SK-N-SH (cell line): ENCODE measurements at regions of chr2 and their contacts with region 1.

Region 1: DNA sequence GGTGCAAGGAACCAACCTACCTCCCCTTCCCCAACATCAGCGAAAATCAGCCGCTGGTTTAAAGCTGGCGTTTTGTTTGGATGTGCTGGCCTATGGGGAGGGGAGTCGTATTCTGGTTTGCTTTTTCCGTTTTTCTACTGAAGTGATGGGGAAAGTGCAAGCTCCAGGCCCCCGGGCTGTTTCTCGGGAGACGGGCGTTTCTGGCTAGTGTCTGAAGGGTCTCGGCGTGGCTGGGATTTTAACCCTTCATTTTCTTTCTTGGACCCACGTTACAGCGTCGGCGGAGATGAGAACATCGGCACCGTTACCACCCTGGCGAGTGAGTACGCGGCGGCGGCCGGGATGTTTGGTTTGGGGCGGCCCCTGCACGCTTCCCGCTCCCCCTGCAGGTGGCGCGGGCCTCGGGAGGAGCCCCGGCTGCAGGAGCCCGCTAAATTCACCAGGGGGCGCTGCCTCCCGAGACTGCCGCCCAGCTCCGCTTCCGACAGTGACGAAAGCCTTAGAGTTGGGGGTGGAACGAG is 70.7 kb downstream of the PLB1 start:
- DNase-seq: peak; percentile 98
- H3K4me3 ChIP-seq: peak overlapping the region; percentile 62
- H3K27ac ChIP-seq: peak overlapping the region; percentile 36 to 71; a peak in 3 of 4 replicates
- H3K4me1 ChIP-seq: peaks cover 0 to 7% of the 10 kb centered on the region in 2 experiments; a peak in 1 of 4 replicates
- H3K27me3 ChIP-seq: no peaks in the 10 kb centered on the region
- CTCF ChIP-seq: peak; percentile 99
- EP300 ChIP-seq: no peak
- RAD21 ChIP-seq: peak; percentile 85

Region 2: DNA sequence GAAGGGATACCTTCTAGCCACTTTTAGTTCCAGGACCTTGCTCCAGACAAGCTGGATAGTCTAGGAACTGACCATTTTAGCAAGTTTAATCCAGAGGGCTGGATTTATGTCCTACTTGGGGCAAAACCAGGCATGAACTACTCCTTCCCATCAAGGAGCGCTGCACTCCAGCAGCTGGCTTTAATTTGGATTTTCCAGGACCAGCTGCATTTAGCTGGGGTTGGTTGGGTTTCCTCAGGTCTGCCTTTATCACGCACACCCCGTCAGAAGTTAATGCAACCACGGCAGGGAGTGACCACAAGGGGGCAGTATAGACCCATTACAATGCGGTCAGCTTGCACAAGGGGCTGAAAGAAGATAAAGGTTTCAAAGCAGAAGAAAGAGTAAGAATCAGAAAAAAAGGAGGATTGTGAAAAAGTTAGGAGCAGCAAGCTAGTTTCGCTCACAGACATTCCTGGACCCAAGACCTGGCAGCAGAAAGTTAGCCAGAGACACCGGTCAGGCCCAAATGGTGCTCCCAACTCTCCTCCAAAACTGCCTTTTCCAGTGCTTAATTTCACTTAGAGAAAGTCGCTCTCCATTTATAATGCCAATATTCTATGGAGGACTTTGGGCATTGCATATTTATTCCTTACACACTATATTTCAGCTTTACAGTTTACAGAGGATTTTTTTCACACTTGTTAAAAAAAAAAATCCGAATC is 862.8 kb before region 1 on chr2:
- CTCF ChIA-PET with region 1: interaction called, 12 read pairs
- POLR2A ChIA-PET with region 1: no interaction called
- DNase-seq: peak; percentile 88
- H3K4me3 ChIP-seq: no peak overlapping the region; a peak in 1 of 4 replicates
- H3K27ac ChIP-seq: peak overlapping the region in 1 of 2 experiments; percentile 29; a peak in 1 of 4 replicates
- H3K4me1 ChIP-seq: peaks cover 10 to 16% of the 10 kb centered on the region in 2 experiments; a peak in 3 of 4 replicates
- H3K27me3 ChIP-seq: no peaks in the 10 kb centered on the region
- CTCF ChIP-seq: peak; percentile 99
- EP300 ChIP-seq: peak in 1 of 2 experiments; percentile 48; a peak in 1 of 4 replicates
- RAD21 ChIP-seq: peak; percentile 98

Region 3: DNA sequence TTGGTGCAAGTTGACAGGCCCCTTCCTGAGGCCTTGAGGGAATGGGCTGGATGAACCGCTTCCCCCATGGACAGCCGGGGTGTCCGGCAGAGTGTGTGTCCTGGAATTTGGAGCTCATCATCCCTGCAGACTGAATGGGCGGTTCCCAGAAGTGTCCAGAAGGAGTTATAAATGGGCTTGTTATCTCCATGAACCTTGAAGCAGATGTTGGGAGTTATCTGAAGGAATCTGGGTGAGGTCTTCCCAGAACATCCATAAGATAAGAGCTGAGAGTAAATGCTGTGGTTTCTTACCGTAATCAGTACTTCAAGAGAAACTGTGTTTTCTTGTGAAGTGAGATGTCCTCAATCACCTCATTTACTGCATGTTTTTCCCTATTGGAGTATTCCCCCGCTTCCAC is 49.6 kb before region 1 on chr2:
- CTCF ChIA-PET with region 1: interaction called, 18 read pairs
- POLR2A ChIA-PET with region 1: no interaction called
- DNase-seq: no peak
- H3K4me3 ChIP-seq: no peak overlapping the region
- H3K27ac ChIP-seq: no peak overlapping the region
- H3K4me1 ChIP-seq: peaks cover 0 to 13% of the 10 kb centered on the region in 2 experiments; a peak in 2 of 4 replicates
- H3K27me3 ChIP-seq: peaks cover 47% of the 10 kb centered on the region; the same call in 1 of the 2 replicates
- CTCF ChIP-seq: no peak
- EP300 ChIP-seq: no peak
- RAD21 ChIP-seq: no peak

Region 4: DNA sequence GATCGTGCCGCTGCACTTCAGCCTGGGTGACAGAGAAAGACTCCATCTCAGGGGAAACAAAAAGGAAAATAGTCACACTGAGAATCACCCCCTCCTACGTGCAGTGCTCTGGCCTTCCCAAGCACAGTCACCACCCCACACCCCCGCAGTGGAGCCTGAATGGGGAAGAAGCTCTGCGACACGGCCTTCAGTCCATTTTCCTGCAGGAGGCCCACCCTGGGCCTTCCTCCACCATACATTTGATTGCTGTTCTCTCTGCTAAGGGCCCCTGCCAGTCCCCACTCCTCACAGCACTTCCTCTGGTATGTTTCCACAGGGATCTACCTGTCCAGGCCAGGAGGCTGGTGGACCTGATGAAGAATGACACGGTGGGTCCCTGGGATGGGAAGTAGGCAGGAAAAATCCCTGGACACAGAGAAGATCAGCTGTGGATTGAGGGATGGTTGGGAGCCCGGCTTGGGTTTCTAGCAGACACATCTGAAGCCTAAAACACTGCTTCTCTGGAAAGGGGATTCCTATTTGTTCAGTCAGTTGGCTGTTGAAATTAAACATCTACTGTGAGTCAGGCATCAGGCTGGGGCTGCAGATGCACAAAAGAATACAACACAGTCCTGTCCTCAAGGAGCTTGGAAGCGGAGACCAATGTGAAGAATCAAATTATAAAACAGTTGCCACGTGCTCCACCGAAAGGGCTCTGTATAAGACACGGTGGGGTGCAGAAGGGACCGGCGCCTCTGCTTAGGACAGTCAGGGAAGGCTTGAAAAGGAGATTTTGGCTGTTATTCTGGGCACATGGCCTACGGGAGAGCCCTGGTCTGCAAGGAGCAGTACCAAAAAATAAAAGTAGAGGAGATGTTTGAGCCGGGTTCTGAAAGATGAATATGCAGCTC is 11.5 kb after region 1 on chr2:
- CTCF ChIA-PET with region 1: interaction called, 59 read pairs
- POLR2A ChIA-PET with region 1: no interaction called
- DNase-seq: no peak
- H3K4me3 ChIP-seq: no peak overlapping the region
- H3K27ac ChIP-seq: no peak overlapping the region
- H3K4me1 ChIP-seq: no peaks in the 10 kb centered on the region; a peak in 1 of 4 replicates
- H3K27me3 ChIP-seq: no peaks in the 10 kb centered on the region
- CTCF ChIP-seq: no peak
- EP300 ChIP-seq: no peak
- RAD21 ChIP-seq: no peak

Region 5: DNA sequence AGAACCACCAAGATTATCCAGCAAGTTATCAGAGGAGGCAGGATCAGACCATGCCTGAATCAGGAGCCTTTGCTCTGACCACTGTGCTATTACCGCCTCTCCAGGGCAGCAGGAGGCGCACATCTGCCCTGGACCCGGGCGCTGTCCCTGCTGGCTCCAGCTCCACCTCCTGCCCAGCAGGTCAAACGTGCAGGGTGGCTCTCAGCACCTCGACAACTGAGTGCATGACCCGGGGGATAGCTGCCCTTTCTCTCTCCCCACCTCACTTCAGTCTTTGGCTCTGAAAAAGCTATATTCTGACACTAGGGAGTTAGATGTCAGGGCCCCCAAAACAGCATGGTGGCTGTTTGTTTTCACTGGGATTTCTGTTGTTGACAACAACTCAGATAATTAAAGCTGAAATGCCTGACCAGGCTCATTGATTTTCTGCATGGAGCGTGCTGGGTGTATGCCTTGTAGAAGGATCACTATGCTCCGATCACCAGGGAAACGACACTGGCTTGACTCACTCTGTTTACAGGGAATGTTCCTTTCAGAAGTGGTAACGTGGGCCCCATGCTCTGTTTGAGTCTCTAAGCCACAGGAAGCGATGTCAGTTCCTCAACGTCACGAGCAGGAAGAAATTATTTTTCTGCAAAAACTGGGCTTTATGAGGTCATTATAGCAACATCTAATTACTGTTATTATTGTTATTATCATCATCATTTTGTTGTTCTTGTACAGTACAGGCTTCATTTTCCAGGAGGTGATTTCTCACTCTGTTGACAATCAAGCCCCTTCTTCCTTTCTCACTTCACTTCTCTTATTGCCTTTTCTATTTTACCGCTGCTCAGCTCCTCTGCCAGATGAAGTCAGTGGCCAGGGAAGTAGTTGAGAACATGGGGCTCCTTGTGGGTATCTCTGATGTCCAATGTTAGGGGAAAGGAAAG is 54.9 kb after region 1 on chr2:
- CTCF ChIA-PET with region 1: interaction called, 14 read pairs
- POLR2A ChIA-PET with region 1: no interaction called
- DNase-seq: peak; percentile 47
- H3K4me3 ChIP-seq: no peak overlapping the region
- H3K27ac ChIP-seq: peak overlapping the region in 1 of 2 experiments; percentile 73; a peak in 2 of 4 replicates
- H3K4me1 ChIP-seq: peaks cover 0 to 2% of the 10 kb centered on the region in 2 experiments; a peak in 3 of 4 replicates
- H3K27me3 ChIP-seq: no peaks in the 10 kb centered on the region
- CTCF ChIP-seq: peak; percentile 47
- EP300 ChIP-seq: no peak
- RAD21 ChIP-seq: peak; percentile 34

Region 6: GRCh38 chr2:28782440-28782839 is 215.9 kb after region 1 on chr2:
- CTCF ChIA-PET with region 1: interaction called, 10 read pairs
- POLR2A ChIA-PET with region 1: no interaction called
- DNase-seq: no peak
- H3K4me3 ChIP-seq: no peak overlapping the region
- H3K27ac ChIP-seq: no peak overlapping the region
- H3K4me1 ChIP-seq: no peaks in the 10 kb centered on the region
- H3K27me3 ChIP-seq: no peaks in the 10 kb centered on the region
- CTCF ChIP-seq: no peak
- EP300 ChIP-seq: no peak
- RAD21 ChIP-seq: no peak

Region 7: GRCh38 chr2:28894470-28895177 is 328.0 kb after region 1 on chr2 and contains the start of gene WDR43:
- CTCF ChIA-PET with region 1: interaction called, 13 read pairs
- POLR2A ChIA-PET with region 1: interaction called, 3 read pairs
- DNase-seq: peak; percentile 99
- H3K4me3 ChIP-seq: peak within 1 kb of the TSS; percentile 88 to 100
- H3K27ac ChIP-seq: peak within 1 kb of the TSS; percentile 63 to 88
- H3K4me1 ChIP-seq: peaks cover 20 to 32% of the 10 kb centered on the region in 2 experiments; a peak in 3 of 4 replicates
- H3K27me3 ChIP-seq: no peaks in the 10 kb centered on the region
- CTCF ChIP-seq: no peak
- EP300 ChIP-seq: peak in 1 of 2 experiments; percentile 67; a peak in 2 of 4 replicates
- RAD21 ChIP-seq: no peak; the same call in 1 of the 2 replicates
- polyA plus RNA-seq, gene WDR43: 35.1 and 48.5 TPM in 2 replicates